ENCODE measurements at regions of chr14 and their contacts with region 1.

Region 1: DNA sequence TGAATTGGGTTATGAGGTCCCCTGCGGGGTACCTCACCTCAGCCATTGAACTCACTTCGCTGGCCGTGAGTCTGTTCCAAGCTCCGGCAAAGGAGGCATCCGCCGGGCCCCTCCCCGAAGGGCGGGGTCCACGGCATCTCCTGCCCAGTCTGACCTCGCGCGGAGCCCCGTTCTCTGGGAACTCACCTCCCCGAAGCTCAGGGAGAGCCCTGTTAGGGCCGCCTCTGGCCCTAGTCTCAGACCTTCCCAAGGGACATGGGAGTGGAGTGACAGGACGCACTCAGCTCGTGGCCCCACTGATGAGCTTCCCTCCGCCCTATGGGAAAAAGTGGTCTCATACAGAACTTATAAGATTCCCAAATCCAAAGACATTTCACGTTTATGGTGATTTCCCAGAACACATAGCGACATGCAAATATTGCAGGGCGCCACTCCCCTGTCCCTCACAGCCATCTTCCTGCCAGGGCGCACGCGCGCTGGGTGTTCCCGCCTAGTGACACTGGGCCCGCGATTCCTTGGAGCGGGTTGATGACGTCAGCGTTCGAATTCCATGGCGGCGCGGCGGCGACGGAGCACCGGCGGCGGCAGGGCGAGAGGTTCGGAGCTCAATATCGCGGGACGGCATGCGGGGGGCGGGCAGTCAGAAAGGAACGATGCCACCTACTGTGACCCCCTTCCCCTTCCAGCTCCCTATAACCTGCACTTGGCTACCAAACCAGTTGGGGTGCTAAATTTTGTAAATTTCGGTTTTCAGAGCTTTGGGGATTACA is at the start of gene PARP2:
- DNase-seq: peak; percentile 82 to 94 (median 93)
- ATAC-seq: peak; percentile 86
- H3K4me3 ChIP-seq: peak within 1 kb of the TSS; percentile 74
- H3K4me3 Mint-ChIP-seq: peak within 1 kb of the TSS; percentile 82 to 99 (median 95)
- H3K27ac ChIP-seq: peak within 1 kb of the TSS; percentile 91
- H3K27ac Mint-ChIP-seq: peak within 1 kb of the TSS; percentile 91 to 98 (median 97)
- H3K4me1 ChIP-seq: peaks cover 4 to 5% of the 10 kb centered on the region in 2 donors
- H3K4me1 Mint-ChIP-seq: peaks cover 6 to 27% (median 18%) of the 10 kb centered on the region in 7 donors
- H3K27me3 ChIP-seq: no peaks in the 10 kb centered on the region
- H3K27me3 Mint-ChIP-seq: peaks cover 0 to 7% (median 0%) of the 10 kb centered on the region in 5 donors
- total RNA-seq, gene PARP2: 15.3 to 24.5 (median 21.3) TPM

Region 2: GRCh38 chr14:20247646-20248246 is 95.5 kb before region 1 on chr14:
- CTCF ChIA-PET with region 1: no interaction called
- POLR2A ChIA-PET with region 1: no interaction called
- intact Hi-C with region 1: no loop called
- DNase-seq: peak in 1 of 9 donors; percentile 5
- ATAC-seq: no peak
- H3K4me3 ChIP-seq: no peak overlapping the region
- H3K4me3 Mint-ChIP-seq: no peak overlapping the region
- H3K27ac ChIP-seq: no peak overlapping the region
- H3K27ac Mint-ChIP-seq: no peak overlapping the region
- H3K4me1 ChIP-seq: no peaks in the 10 kb centered on the region
- H3K4me1 Mint-ChIP-seq: no peaks in the 10 kb centered on the region
- H3K27me3 ChIP-seq: no peaks in the 10 kb centered on the region
- H3K27me3 Mint-ChIP-seq: no peaks in the 10 kb centered on the region

Region 3: DNA sequence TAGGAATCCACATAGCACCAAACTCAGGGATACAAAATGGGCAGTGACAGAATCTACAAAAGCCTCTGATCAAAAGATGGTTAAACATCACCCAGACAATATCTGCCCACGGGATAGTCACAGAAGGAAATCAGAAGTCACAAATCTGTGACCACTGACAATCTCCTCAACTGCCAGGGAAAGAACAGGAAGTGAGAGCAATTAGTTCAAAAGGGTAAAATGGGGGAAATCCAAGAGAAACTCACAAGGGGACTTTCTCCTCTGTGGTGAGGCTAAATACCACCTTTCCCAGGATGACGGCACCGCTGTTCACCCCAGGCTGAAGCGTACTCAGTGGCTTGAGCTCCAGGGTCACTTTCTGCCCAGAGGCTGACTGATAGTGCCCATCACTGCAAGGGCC is 48.2 kb before region 1 on chr14:
- CTCF ChIA-PET with region 1: no interaction called
- POLR2A ChIA-PET with region 1: no interaction called
- intact Hi-C with region 1: no loop called
- DNase-seq: no peak
- ATAC-seq: no peak
- H3K4me3 ChIP-seq: no peak overlapping the region
- H3K4me3 Mint-ChIP-seq: no peak overlapping the region
- H3K27ac ChIP-seq: no peak overlapping the region
- H3K27ac Mint-ChIP-seq: peak overlapping the region in 1 of 9 donors; percentile 86
- H3K4me1 ChIP-seq: no peaks in the 10 kb centered on the region
- H3K4me1 Mint-ChIP-seq: peaks cover 0 to 5% (median under 1%) of the 10 kb centered on the region in 7 donors
- H3K27me3 ChIP-seq: no peaks in the 10 kb centered on the region
- H3K27me3 Mint-ChIP-seq: no peaks in the 10 kb centered on the region

Region 4: GRCh38 chr14:20305265-20306078 is 37.8 kb before region 1 on chr14 and contains the start of gene TTC5:
- CTCF ChIA-PET with region 1: no interaction called
- POLR2A ChIA-PET with region 1: no interaction called
- intact Hi-C with region 1: loop called in 1 of 2 experiments (anchors 1 kb)
- DNase-seq: peak; percentile 82 to 96 (median 89)
- ATAC-seq: peak; percentile 100
- H3K4me3 ChIP-seq: peak within 1 kb of the TSS; percentile 64
- H3K4me3 Mint-ChIP-seq: peak within 1 kb of the TSS; percentile 88 to 99 (median 94)
- H3K27ac ChIP-seq: peak within 1 kb of the TSS; percentile 75
- H3K27ac Mint-ChIP-seq: peak within 1 kb of the TSS; percentile 78 to 95 (median 90)
- H3K4me1 ChIP-seq: peaks cover 9 to 14% of the 10 kb centered on the region in 2 donors
- H3K4me1 Mint-ChIP-seq: peaks cover 22 to 44% (median 38%) of the 10 kb centered on the region in 7 donors
- H3K27me3 ChIP-seq: no peaks in the 10 kb centered on the region
- H3K27me3 Mint-ChIP-seq: no peaks in the 10 kb centered on the region
- total RNA-seq, gene TTC5: 16.4 to 30.1 (median 20.3) TPM

Region 5: DNA sequence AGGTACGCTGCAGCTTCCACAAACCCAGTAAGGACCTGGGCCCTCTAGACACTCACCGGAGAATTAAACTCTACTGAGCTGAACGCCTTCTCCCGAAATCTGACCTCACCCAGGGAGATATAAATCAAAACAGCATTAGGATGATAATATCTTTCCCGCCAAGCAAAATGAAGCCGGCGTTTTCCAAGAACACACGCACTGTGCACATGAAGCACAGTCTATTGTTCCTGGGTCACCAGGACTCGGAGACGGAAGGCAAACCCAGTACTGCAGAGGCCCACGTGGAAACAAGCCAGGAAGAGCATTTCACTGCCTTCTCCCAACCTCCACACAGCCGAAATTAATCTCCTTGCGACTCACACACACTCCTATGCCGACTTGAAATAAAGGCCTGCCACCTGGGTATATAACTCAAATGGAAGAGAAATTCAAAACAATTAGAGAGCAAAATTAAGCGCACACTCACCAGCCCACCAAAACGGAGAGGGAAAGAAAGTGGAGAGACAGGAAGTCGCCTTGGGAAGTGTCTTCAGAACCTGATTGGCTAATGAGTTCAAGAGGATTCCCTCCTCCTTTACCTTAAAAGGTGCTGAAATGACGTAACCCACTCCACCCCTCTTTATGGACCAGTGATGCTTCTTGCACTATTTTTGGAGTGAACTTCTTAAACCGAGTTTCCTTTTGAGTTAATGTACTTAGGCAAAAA is 10.3 kb before region 1 on chr14 and contains the start of gene CCNB1IP1:
- CTCF ChIA-PET with region 1: interaction called, 68 read pairs
- POLR2A ChIA-PET with region 1: interaction called, 35 read pairs
- intact Hi-C with region 1: loop called (anchors 1 kb)
- DNase-seq: peak; percentile 11 to 80 (median 64)
- ATAC-seq: peak; percentile 99
- H3K4me3 ChIP-seq: peak within 1 kb of the TSS; percentile 97
- H3K4me3 Mint-ChIP-seq: peak within 1 kb of the TSS; percentile 85 to 100 (median 96)
- H3K27ac ChIP-seq: peak within 1 kb of the TSS; percentile 62
- H3K27ac Mint-ChIP-seq: peak within 1 kb of the TSS; percentile 67 to 96 (median 92)
- H3K4me1 ChIP-seq: no peaks in the 10 kb centered on the region
- H3K4me1 Mint-ChIP-seq: peaks cover 12 to 49% (median 34%) of the 10 kb centered on the region in 7 donors
- H3K27me3 ChIP-seq: no peaks in the 10 kb centered on the region
- H3K27me3 Mint-ChIP-seq: peaks cover 0 to 4% (median 0%) of the 10 kb centered on the region in 5 donors
- total RNA-seq, gene CCNB1IP1: 19.1 to 29.8 (median 28.7) TPM

Region 6: DNA sequence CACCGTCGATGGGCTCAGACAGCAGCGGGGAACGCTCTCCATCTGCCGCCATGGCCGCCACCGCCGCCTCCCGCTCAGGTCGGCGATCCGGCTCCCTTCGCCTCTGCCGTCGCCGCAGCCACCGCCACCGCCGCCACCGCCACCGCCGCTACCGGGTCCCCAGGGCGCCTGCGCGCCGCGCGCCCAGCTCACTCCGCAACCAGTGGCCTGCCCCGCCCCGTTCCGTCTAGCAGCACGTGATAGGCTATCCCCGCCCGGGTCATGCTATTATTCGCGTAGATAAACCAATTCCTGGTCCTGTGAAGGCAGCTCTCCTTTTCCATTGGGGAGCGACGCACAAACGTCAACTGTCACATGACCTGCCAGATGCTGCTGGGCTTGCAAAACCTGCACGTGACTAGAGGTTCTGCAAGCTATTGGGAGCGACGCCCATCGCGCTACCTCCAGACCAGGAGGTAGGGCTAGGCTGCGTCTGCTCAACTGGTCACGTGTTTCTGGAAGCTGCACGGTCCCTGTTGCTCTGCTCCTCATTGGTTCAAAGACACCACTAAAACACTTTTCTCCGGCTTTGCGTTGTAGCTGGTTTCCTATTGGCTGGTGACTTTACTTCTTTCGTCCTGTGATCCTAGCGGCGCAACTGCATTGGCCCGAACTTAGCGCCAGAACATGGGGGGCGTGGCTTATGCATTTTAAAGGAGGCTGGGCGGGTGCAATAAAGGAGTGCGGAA is 118.2 kb after region 1 on chr14 and contains the start of gene PIP4P1:
- CTCF ChIA-PET with region 1: no interaction called
- POLR2A ChIA-PET with region 1: interaction called, 23 read pairs
- intact Hi-C with region 1: loop called (anchors 1 kb)
- DNase-seq: peak; percentile 95 to 100 (median 99)
- ATAC-seq: peak; percentile 92
- H3K4me3 ChIP-seq: peak within 1 kb of the TSS; percentile 83
- H3K4me3 Mint-ChIP-seq: peak within 1 kb of the TSS; percentile 81 to 97 (median 92)
- H3K27ac ChIP-seq: peak within 1 kb of the TSS; percentile 96
- H3K27ac Mint-ChIP-seq: peak within 1 kb of the TSS; percentile 88 to 99 (median 92)
- H3K4me1 ChIP-seq: peaks cover 20 to 21% of the 10 kb centered on the region in 2 donors
- H3K4me1 Mint-ChIP-seq: peaks cover 18 to 36% (median 32%) of the 10 kb centered on the region in 7 donors
- H3K27me3 ChIP-seq: no peaks in the 10 kb centered on the region
- H3K27me3 Mint-ChIP-seq: peaks cover 0 to 2% (median 0%) of the 10 kb centered on the region in 5 donors
- total RNA-seq, gene PIP4P1: 34.9 to 87.1 (median 74.2) TPM

Region 7: DNA sequence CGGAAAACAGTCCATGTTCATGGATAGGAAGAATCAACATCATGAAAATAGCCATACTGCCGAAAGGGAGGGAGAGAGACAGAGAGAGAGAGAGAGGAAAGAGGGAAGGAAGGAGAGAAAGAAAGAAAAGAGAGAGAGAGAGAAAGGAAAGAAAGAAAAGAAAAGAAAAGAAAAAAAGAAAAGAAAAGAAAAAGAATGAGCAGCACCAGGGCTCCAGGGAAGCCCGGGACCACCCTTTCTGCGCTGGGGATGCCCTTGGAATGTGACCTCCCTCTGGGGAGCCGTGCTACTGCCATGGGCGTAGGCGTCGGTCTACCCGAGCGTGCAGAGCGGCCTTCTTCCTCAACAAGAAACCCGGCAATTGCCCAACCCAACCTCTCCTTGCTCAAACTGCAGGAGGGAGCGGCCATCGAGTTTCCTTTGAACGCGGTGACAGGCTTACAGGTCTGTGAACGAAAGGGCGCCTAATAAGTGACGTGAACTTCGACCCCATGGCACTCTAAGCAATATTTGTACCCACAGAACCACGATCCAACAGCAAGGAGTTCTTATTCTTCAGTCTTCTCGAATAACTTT is 281.3 kb after region 1 on chr14:
- CTCF ChIA-PET with region 1: no interaction called
- POLR2A ChIA-PET with region 1: no interaction called
- intact Hi-C with region 1: loop called in 1 of 2 experiments (anchors 2 kb)
- DNase-seq: peak in 6 of 9 donors; percentile 27 to 59 (median 36)
- ATAC-seq: peak; percentile 72
- H3K4me3 ChIP-seq: peak overlapping the region; percentile 46
- H3K4me3 Mint-ChIP-seq: peak overlapping the region; percentile 76 to 92 (median 84)
- H3K27ac ChIP-seq: no peak overlapping the region
- H3K27ac Mint-ChIP-seq: peak overlapping the region; percentile 77 to 96 (median 88)
- H3K4me1 ChIP-seq: peaks cover 0 to 32% of the 10 kb centered on the region in 2 donors
- H3K4me1 Mint-ChIP-seq: peaks cover 34 to 76% (median 70%) of the 10 kb centered on the region in 7 donors
- H3K27me3 ChIP-seq: no peaks in the 10 kb centered on the region
- H3K27me3 Mint-ChIP-seq: peaks cover 27 to 59% (median 40%) of the 10 kb centered on the region in 5 donors

Region 8: DNA sequence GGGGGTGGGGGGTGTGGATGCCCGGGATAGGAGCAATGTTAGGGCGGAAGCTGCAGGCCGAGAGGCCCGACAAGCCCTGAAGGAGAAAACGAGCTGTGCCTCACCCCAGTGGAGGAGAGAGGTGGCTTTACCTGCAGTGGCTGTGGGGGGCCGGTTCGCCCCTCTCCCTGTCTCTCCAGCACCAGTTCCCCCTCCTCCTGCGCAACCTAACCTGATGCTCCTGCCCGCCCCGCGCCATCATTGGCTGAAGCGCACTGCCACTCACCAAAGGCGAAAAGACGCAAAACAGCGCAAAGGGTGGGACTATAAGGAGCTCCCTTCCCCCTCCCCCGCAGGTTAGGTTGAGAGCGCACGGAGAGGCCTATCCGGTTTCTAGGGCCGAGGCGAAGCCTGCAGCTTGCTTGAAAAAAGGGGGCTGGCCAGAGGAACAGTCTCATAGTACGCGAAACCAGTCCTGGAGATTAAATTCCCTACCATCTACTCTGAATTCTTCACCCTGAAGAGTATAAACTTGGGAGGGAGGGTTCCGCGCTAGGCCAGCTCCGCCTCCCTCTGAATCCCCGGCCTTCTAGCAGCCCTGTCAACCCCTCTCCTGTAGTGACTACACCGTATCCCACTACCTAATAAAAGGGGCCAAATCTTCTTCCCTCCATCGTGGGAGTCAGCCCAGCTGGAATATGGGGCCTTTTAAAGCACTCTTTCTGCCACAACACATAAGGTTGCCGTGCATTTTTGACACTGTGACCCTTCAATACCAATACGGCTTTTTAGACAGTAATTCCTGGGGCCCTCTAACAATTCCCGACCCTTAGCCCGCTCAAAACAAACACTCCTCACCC is 1094.0 kb after region 1 on chr14:
- CTCF ChIA-PET with region 1: no interaction called
- POLR2A ChIA-PET with region 1: no interaction called
- intact Hi-C with region 1: loop called in 1 of 2 experiments (anchors 1 kb)
- DNase-seq: peak; percentile 93 to 100 (median 99)
- ATAC-seq: peak; percentile 100
- H3K4me3 ChIP-seq: peak overlapping the region; percentile 87
- H3K4me3 Mint-ChIP-seq: peak overlapping the region; percentile 86 to 97 (median 92)
- H3K27ac ChIP-seq: peak overlapping the region; percentile 94
- H3K27ac Mint-ChIP-seq: peak overlapping the region; percentile 90 to 98 (median 94)
- H3K4me1 ChIP-seq: peaks cover 13 to 22% of the 10 kb centered on the region in 2 donors
- H3K4me1 Mint-ChIP-seq: peaks cover 43 to 86% (median 68%) of the 10 kb centered on the region in 7 donors
- H3K27me3 ChIP-seq: no peaks in the 10 kb centered on the region
- H3K27me3 Mint-ChIP-seq: no peaks in the 10 kb centered on the region